Heart right ventricle (tissue), 16 donors: ENCODE measurements at regions of chr15 and their contacts with region 1.

Region 1: DNA sequence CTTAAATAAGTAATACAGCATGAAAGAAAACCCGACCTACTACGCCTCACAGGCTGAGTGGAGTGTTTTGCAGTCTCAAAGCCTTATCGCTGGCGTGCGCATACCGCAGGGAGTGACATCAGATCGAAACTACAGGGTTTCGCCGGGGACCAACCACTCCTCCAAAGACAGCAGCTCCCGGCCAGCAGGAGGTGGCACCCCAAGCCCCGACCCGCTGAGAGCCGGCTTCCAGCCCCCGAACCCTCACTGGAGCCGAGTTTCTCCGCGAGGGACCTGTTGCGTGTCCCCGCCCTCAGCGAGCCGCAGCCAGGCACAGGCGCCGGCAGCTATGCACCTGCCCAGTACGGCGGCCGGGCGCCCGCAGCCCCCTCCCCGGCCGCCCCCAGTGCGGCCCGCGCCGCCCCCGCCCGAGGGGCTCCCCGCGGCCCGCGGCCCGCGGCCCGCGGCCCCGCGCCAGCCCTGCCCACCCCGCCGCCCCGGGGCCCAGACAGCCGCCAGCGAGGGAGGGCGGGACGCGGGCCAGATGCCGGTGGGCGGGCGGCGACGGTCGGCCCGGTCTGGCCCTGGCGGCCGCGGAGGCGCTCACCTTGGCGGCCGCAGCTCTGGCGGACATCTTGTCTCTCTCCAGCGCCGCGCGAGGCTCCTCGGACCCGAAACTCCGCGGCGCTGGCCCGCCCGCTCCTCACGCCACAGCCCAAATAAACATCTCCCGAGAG is 694 bp downstream of the TJP1 start:
- DNase-seq: peak; percentile 69 to 83
- ATAC-seq: peak; percentile 39 to 86 (median 72)
- H3K4me3 ChIP-seq: peak overlapping the region; percentile 56 to 91 (median 76)
- H3K27ac ChIP-seq: peak overlapping the region; percentile 92 to 99 (median 98)
- H3K4me1 ChIP-seq: peaks cover 4 to 63% (median 28%) of the 10 kb centered on the region in 9 donors
- H3K27me3 ChIP-seq: peaks cover 0 to 73% (median 0%) of the 10 kb centered on the region in 7 donors
- CTCF ChIP-seq: peak in 8 of 9 donors; percentile 9 to 54 (median 28)

Region 2: GRCh38 chr15:29470311-29471193 is 351.0 kb before region 1 on chr15:
- intact Hi-C with region 1: no loop called
- DNase-seq: no peak
- ATAC-seq: no peak
- H3K4me3 ChIP-seq: no peak overlapping the region
- H3K27ac ChIP-seq: no peak overlapping the region
- H3K4me1 ChIP-seq: peaks cover 0 to 2% (median 0%) of the 10 kb centered on the region in 9 donors
- H3K27me3 ChIP-seq: no peaks in the 10 kb centered on the region
- CTCF ChIP-seq: no peak

Region 3: DNA sequence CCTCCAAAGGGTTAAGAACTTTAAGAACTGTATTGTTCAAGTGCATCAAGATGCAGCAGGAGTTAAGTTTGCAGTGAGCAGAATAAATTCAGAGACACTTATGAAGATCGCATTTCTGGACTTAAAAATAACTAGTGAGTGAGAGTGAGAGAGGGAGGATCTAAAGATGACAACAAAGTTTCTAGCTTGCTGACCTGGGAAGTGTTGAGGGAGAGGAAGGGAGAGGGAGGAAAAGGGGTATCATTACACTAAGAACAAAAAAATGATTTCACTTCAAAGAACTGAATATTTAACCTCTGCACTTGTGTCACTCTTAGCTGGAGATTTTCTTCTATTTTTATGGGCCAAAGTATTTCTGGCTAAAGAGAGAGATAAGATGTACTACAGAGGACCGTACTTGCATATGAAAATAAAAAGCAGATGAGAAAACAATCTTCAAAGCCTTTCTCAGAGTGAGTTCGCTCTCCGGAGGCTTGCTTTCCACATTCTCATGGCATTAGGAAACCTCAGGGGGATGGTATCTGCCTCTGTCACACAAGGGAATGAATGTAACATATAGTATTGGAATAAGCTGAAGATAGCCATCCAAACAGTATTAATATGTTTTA is 92.1 kb after region 1 on chr15:
- intact Hi-C with region 1: loop called in 7 of 10 experiments (anchors 1 to 10 kb)
- DNase-seq: no peak
- ATAC-seq: peak; percentile 36 to 76 (median 68)
- H3K4me3 ChIP-seq: no peak overlapping the region
- H3K27ac ChIP-seq: peak overlapping the region; percentile 4 to 86 (median 68)
- H3K4me1 ChIP-seq: peaks cover 5 to 62% (median 34%) of the 10 kb centered on the region in 9 donors
- H3K27me3 ChIP-seq: no peaks in the 10 kb centered on the region
- CTCF ChIP-seq: no peak